Right cardiac atrium (tissue), 5 donors: ENCODE measurements at regions of chr1 and their contacts with region 1.

Region 1: GRCh38 chr1:47313915-47314664 is at the start of gene STIL:
- DNase-seq: peak; percentile 99
- ATAC-seq: peak; percentile 100
- H3K4me3 ChIP-seq: peak within 1 kb of the TSS; percentile 68
- H3K27ac ChIP-seq: peak within 1 kb of the TSS; percentile 53
- H3K4me1 ChIP-seq: peaks cover 3% of the 10 kb centered on the region
- H3K27me3 ChIP-seq: no peaks in the 10 kb centered on the region
- total RNA-seq, gene STIL: 0.88 to 0.94 (median 0.89) TPM

Region 2: DNA sequence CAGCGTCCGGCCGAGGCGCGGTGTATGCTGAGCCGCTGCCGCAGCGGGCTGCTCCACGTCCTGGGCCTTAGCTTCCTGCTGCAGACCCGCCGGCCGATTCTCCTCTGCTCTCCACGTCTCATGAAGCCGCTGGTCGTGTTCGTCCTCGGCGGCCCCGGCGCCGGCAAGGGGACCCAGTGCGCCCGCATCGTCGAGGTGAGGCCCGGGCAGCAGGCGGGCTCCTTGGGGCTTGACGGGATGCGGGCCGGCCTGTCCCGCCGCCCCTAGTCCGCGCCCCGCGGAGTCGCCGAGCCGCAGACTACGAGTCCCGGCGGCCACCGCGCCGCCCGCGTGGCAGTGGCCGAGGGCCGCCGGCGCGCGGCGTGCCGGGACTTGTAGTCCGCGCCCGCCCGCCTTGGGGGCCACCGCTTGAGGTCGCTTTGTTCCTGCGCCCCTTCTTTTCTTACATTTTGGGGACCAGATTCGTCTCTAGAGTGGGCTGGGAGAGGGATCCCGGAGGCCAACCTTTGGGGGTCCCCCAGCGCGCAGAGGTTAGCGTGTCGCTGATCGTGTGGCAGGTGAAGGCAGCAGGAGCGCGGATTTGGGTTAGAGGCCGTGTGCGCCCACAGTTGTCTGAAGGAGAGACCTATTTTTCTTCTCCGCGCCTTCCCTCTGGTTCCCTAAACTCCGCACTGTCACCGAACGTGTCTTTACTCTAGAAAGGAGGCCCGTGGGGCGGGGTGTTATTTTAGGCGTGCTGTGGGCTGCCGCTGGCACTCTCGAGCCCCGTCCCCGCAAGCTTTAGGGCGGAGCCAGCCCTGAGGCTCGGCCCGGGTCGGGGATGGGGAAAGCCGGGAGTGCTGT is 20.1 kb after region 1 on chr1:
- intact Hi-C with region 1: loop called in 1 of 4 experiments (anchors 2 kb)
- DNase-seq: peak; percentile 86 to 93 (median 92)
- ATAC-seq: peak; percentile 94 to 95
- H3K4me3 ChIP-seq: peak overlapping the region; percentile 78
- H3K27ac ChIP-seq: peak overlapping the region; percentile 99
- H3K4me1 ChIP-seq: peaks cover 3% of the 10 kb centered on the region
- H3K27me3 ChIP-seq: no peaks in the 10 kb centered on the region

Region 3: GRCh38 chr1:47478090-47478489 is 164.0 kb after region 1 on chr1:
- intact Hi-C with region 1: no loop called
- DNase-seq: no peak
- ATAC-seq: peak in 1 of 2 donors; percentile 58
- H3K4me3 ChIP-seq: no peak overlapping the region
- H3K27ac ChIP-seq: no peak overlapping the region
- H3K4me1 ChIP-seq: no peaks in the 10 kb centered on the region
- H3K27me3 ChIP-seq: no peaks in the 10 kb centered on the region